Psoas muscle (tissue), 8 donors: ENCODE measurements at regions of chr5 and their contacts with region 1.

Region 1: GRCh38 chr5:177311723-177312648 is at the start of gene MXD3:
- DNase-seq: peak; percentile 98 to 99
- ATAC-seq: peak; percentile 85 to 94 (median 86)
- H3K4me3 ChIP-seq: peak within 1 kb of the TSS; percentile 73
- H3K27ac ChIP-seq: peak within 1 kb of the TSS; percentile 83
- H3K4me1 ChIP-seq: peaks cover 32% of the 10 kb centered on the region
- H3K27me3 ChIP-seq: no peaks in the 10 kb centered on the region
- CTCF ChIP-seq: no peak
- total RNA-seq, gene MXD3: 2.3 to 4.2 (median 2.8) TPM

Region 2: DNA sequence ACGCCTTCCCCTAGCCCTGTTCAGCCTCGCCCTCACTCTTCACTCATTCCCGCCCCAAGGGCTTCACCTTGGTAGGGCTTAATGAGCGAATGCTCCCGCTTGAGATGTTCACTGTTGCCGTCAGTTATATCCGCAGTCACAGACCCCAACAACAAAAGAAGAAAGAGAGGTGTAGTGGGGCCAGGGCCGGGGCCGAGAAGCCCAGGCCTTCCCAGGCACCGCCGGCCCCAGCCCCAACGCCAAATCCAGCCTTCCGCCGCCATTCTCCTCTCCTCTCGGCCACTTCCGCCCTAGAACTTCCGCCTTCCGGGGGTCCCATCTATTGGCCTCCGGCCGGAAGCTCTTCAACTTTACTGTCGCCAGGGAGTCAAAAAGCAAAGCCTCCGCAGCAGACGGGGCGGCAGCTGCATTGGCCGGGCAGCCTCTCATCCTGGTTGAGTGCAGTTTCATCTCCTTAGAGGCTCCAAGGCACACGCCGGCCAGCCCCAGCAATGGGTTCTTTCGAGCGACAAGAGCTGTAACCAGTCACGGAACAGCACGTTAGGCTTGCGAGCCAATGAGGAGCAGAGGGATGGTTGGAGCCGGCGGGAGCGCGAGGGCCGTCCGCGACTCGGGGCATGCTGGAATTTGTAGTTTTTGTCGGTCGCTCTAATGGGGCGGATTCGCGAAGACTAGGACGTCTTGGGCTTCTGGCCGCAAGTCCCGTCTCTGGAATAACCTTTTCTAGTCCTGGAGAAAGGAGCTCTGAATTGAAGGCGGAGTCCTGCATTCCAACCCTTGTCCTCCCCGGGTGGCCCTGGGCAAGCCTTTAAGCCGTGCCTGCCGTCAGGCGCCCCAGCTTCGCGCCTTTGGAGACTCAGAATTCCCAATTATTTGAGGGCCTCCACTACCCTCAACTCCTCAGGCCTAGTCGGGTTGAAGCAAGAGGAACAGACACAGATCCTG is 39.7 kb after region 1 on chr5 and contains the start of gene LMAN2:
- intact Hi-C with region 1: loop called in 1 of 2 experiments (anchors 5 kb)
- DNase-seq: peak; percentile 91 to 96
- ATAC-seq: peak; percentile 97 to 99 (median 98)
- H3K4me3 ChIP-seq: peak within 1 kb of the TSS; percentile 94
- H3K27ac ChIP-seq: peak within 1 kb of the TSS; percentile 94
- H3K4me1 ChIP-seq: peaks cover 21% of the 10 kb centered on the region
- H3K27me3 ChIP-seq: no peaks in the 10 kb centered on the region
- CTCF ChIP-seq: no peak
- total RNA-seq, gene LMAN2: 28.7 to 55.8 (median 43.1) TPM

Region 3: DNA sequence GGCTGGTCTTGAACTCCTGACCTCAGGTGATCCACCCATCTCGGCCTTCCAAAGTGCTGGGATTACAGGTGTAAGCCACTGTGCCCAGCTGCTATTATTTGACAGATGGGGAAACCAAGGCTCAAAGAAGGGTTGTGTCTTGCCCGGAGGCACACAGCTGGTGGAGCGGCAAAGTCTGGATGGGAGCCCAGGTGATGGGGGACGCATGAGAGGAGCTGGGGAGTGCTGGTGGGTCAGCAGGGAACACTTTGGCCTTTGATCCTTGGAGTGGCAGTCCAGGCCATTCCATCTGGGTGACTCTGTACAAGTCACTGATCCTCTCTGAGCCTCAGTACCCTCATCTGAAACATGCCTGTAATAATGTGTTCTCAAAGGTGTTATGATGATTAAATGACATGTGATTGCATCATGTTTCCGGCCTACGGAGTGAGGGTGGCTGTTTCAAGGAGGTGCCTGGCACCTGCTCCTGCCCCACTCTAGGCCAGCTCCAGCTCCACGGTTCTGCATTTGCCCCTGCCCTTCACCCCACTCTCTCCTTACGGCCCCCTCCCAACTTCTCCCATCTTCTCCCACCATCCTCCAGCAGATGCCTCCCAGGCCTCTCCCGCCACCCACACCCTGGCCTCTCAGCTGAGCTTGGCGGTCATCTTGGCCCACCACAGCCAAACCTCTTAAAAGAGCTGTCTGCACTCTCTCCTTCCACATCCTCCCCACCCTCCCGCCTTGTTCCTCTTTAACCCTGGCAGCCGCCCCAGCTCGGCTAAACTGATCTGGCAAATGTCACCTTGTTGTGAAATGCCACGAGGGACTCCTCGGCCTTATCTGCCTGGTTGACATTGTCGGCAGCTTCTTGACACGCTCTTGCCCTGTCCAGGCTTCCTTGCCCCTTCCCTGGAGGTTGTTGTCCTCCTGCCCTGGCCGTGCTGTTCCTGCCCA is 167.0 kb after region 1 on chr5:
- intact Hi-C with region 1: no loop called
- DNase-seq: peak; percentile 86 to 94
- ATAC-seq: peak; percentile 56 to 84 (median 70)
- H3K4me3 ChIP-seq: no peak overlapping the region
- H3K27ac ChIP-seq: peak overlapping the region; percentile 80
- H3K4me1 ChIP-seq: peaks cover 26% of the 10 kb centered on the region
- H3K27me3 ChIP-seq: no peaks in the 10 kb centered on the region
- CTCF ChIP-seq: no peak

Region 4: DNA sequence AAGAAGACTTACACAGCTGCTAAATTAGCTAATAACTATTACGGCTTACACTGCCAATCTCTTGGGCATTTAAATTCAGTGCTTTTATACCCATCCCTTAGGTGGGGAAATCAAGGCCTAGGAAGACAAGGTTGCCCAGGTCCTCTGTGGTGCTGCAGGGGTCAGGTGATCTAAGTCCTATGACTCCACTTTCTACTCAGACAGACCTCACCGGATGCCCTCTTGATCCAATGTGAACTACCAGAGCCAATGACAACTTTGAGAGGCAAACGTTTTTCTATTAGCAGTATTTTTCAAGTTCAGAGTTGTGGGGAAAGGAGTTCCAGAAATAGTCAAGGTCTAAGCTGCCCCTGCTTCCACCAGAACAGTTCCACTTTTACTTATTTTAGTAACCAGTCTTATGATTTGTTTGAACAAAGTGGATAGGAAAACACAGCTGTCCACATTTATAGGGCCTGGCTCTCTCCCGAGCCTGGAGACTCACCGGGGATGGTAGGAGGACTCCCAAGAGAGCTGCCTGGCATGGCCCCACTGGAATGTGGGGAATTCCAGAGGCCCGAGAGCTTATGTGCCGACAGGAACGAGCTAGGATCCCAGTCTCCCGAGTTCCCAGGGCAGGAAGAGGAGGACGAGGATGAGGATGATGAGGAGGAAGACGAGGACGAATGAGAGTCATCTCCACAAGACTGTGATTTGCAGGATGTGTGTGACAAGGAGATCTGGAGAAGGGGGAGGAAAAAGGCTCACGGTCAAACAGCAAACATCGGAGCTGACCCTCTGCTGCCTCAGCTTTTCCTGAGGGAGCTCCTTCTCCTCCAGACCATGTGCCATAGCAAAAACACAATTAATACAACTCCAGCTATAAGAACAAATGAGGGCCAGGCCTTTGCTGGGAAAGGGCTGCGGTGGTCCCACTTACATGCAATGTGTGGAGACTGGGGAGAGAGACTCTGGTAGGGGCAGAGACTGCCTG is 225.7 kb after region 1 on chr5:
- intact Hi-C with region 1: no loop called
- DNase-seq: peak; percentile 53 to 73
- ATAC-seq: peak; percentile 44 to 65 (median 60)
- H3K4me3 ChIP-seq: peak overlapping the region; percentile 16
- H3K27ac ChIP-seq: peak overlapping the region; percentile 86
- H3K4me1 ChIP-seq: peaks cover 85% of the 10 kb centered on the region
- H3K27me3 ChIP-seq: no peaks in the 10 kb centered on the region
- CTCF ChIP-seq: no peak